Activated CD8-positive, alpha-beta T cell treated with anti-CD3 and anti-CD28 coated beads for 36 hours (primary cell): ENCODE measurements at regions of chr2 and their contacts with region 1.

Region 1: GRCh38 chr2:207692206-207693065 is 19.0 kb upstream of the CCNYL1 start:
- DNase-seq: peak; percentile 58
- ATAC-seq: peak; percentile 42
- H3K4me3 Mint-ChIP-seq: no peak overlapping the region
- H3K27ac Mint-ChIP-seq: no peak overlapping the region
- H3K4me1 Mint-ChIP-seq: peaks cover 9% of the 10 kb centered on the region
- H3K27me3 Mint-ChIP-seq: no peaks in the 10 kb centered on the region
- CTCF ChIP-seq: peak; percentile 65

Region 2: GRCh38 chr2:207385903-207386302 is 306.5 kb before region 1 on chr2:
- CTCF ChIA-PET with region 1: no interaction called
- POLR2A ChIA-PET with region 1: no interaction called
- intact Hi-C with region 1: no loop called
- DNase-seq: no peak
- ATAC-seq: no peak
- H3K4me3 Mint-ChIP-seq: no peak overlapping the region
- H3K27ac Mint-ChIP-seq: no peak overlapping the region
- H3K4me1 Mint-ChIP-seq: no peaks in the 10 kb centered on the region
- H3K27me3 Mint-ChIP-seq: no peaks in the 10 kb centered on the region
- CTCF ChIP-seq: no peak

Region 3: DNA sequence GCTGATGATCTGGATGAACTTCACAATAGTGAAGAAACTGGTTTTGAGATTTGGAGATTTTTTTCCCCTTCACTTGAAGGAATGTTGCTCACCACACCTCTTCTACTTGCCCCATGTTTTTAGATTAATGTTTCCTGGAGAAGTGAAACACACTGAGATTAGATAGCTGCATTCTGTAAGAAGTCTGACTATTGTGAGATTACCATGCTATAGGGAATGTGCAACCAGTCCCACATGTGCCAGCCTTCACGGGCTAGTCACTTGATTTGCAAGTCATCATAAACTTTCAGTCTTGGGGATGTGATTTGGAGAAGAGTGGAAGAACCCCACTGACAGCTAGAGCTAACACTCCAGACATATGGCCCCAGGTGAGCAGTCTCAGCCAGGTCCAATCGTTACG is 11.6 kb after region 1 on chr2:
- CTCF ChIA-PET with region 1: interaction called, 21 read pairs
- POLR2A ChIA-PET with region 1: no interaction called
- intact Hi-C with region 1: no loop called
- DNase-seq: no peak
- ATAC-seq: no peak
- H3K4me3 Mint-ChIP-seq: no peak overlapping the region
- H3K27ac Mint-ChIP-seq: no peak overlapping the region
- H3K4me1 Mint-ChIP-seq: peaks cover 7% of the 10 kb centered on the region
- H3K27me3 Mint-ChIP-seq: no peaks in the 10 kb centered on the region
- CTCF ChIP-seq: no peak

Region 4: DNA sequence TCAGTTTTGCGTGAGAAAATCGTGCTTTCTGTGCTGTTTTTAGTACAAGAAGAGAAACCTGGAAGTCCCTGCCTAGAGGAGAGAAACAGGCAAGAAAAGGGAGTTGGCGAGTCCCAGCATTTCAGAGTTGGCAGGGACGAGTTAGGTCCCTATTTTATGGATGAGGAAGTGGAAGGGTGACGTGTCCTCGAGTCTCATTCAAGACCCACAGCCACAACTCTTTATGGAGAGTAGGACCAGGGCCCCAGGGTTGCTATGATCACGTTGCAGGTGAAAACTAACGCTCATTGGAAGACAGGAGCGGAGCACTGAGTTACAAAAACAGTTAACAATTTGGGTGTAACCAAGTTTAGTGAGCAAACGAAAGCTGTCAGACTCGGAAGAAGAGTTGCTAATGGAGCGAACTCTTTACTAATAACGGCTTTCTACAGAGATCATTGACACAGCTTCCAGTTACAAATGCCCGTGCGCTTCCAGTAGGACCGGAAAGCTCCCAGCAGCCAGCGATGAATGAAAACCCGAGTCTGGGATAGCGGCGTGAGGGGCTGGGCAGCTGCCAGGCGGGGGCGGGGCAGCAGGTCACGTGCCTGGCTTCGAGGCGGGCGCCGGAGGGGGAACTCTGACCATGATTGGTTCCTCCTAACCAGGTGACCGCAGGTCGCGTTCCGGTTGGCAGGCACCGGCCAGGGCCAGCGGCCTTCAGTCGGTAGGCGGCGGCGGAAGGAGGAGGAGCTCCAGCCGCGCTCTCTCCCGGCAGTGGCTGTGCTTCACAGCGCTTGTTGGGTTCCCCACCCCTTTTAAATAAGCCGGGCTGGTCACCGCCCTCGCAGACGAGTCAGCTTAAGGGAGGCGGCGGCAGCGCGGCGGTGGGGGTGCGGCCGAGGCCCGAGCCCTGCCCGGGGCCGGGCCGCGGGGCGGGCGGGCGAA is 18.6 kb after region 1 on chr2 and contains the start of gene CCNYL1:
- CTCF ChIA-PET with region 1: interaction called, 21 read pairs
- POLR2A ChIA-PET with region 1: no interaction called
- intact Hi-C with region 1: no loop called
- DNase-seq: peak; percentile 98
- ATAC-seq: peak; percentile 99
- H3K4me3 Mint-ChIP-seq: peak within 1 kb of the TSS; percentile 96
- H3K27ac Mint-ChIP-seq: peak within 1 kb of the TSS; percentile 77
- H3K4me1 Mint-ChIP-seq: peaks cover 31% of the 10 kb centered on the region
- H3K27me3 Mint-ChIP-seq: no peaks in the 10 kb centered on the region
- CTCF ChIP-seq: no peak
- total RNA-seq, gene CCNYL1: 3.8 to 4.3 TPM